Activated B cell treated with CpG ODN at 0.5 μM for 24 hours (primary cell): ENCODE measurements at regions of chr17 and their contacts with region 1.

Region 1: DNA sequence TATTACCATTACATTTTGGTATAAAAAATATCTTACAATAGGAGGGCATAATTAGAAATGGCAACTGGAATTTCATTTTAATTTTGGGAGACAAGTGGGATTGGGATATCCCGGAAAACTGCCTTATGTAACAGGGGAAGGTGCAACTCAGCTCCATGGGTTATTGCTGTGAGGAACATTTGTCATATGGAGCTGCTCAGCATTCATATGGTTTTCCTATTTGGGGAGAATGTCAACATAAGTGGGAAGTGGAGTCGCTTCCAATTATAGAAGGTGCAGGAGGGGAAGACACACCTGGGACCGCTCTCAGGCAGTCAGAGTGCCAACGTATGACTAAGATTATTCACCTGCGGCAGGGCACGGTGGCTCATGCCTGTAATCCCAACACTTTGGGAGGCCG is 10.7 kb downstream of the ODF4 start:
- DNase-seq: no peak
- ATAC-seq: no peak
- H3K4me3 Mint-ChIP-seq: no peak overlapping the region
- H3K27ac Mint-ChIP-seq: no peak overlapping the region
- H3K4me1 Mint-ChIP-seq: no peaks in the 10 kb centered on the region
- H3K27me3 Mint-ChIP-seq: peaks cover 20% of the 10 kb centered on the region
- CTCF ChIP-seq: no peak

Region 2: GRCh38 chr17:8320990-8321389 is 29.3 kb before region 1 on chr17:
- CTCF ChIA-PET with region 1: no interaction called
- POLR2A ChIA-PET with region 1: no interaction called
- intact Hi-C with region 1: loop called (anchors 2 kb)
- DNase-seq: no peak
- ATAC-seq: no peak
- H3K4me3 Mint-ChIP-seq: no peak overlapping the region
- H3K27ac Mint-ChIP-seq: no peak overlapping the region
- H3K4me1 Mint-ChIP-seq: peaks cover 3% of the 10 kb centered on the region
- H3K27me3 Mint-ChIP-seq: peaks cover 37% of the 10 kb centered on the region
- CTCF ChIP-seq: no peak

Region 3: GRCh38 chr17:8383143-8383822 is 32.9 kb after region 1 on chr17 and contains the start of gene RPL26:
- CTCF ChIA-PET with region 1: no interaction called
- POLR2A ChIA-PET with region 1: no interaction called
- intact Hi-C with region 1: no loop called
- DNase-seq: peak; percentile 94
- ATAC-seq: peak; percentile 90
- H3K4me3 Mint-ChIP-seq: peak within 1 kb of the TSS; percentile 98
- H3K27ac Mint-ChIP-seq: peak within 1 kb of the TSS; percentile 95
- H3K4me1 Mint-ChIP-seq: peaks cover 56% of the 10 kb centered on the region
- H3K27me3 Mint-ChIP-seq: no peaks in the 10 kb centered on the region
- CTCF ChIP-seq: peak; percentile 87
- total RNA-seq, gene RPL26: 3,512 and 4,174 TPM in 2 replicates